ENCODE measurements at regions of chr17 and their contacts with region 1.

Region 1: DNA sequence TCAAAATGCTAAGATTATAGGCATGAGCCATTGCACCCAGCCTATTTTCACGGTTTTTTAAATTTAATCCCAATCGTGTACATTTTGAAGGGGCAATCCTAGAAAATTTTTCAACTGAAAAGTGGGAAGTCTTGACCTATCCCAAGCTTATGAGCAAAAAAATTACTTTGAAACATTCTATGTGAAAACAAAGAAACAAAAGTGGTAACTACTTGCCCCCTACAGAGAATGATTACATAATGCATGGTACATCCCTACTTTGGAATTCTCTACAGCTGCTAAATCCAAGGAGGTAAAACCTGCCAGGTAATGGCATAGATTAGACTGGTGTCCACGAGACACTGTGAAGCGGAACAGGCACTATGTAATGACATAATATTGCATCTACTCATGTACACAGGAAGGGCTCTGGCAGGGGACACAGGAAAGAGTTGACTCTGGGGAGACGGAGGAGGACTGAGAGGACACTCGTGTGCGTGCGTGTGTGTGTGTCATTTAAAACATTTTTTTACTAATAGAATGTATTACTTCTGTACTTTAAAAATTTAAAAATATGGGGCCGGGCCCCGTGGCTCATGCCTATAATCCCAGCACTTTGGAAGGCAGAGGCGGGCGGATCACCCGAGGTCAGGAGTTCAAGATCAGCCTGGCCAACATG is 15.7 kb downstream of the ASGR2 start:
- DNase-seq: no peak
- H3K4me3 ChIP-seq: no peak overlapping the region
- H3K27ac ChIP-seq: no peak overlapping the region
- H3K4me1 ChIP-seq: no peaks in the 10 kb centered on the region
- H3K27me3 ChIP-seq: peaks cover 14% of the 10 kb centered on the region
- CTCF ChIP-seq: no peak
- EP300 ChIP-seq: no peak
- POLR2A ChIP-seq: no peak

Region 2: DNA sequence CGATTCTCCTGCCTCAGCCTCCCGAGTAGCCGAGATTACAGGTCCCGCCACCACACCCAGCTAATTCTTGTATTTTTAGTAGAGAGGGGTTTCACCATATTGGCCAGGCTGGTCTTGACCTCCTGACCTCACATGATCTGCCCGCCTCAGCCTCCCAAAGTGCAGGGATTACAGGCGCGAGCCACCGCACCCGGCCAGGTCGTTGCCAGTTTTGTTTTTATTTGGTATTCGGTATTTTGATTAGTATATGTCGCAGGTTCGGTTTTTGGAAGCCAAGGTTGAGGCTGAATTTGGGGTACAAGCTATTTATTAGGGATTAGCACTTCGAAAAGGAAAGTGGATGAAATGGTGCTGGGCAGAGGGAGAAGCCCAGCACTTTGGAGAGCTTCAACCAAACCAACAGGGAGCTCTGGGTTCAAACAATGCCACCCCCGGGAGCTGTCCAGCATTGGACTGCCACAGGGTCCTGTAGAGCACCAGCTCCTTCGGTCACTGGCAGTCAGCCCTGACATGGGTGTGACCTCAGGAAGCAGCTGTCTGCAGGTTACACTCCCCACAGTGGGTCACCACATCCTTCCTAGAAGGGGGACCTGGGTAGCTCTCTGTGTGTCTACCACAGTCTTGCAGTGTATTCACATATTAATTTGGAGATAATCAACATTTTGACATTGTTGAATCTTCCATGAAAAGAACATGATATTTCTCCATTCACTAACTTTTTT is 17.4 kb before region 1 on chr17:
- in situ Hi-C with region 1: no loop called
- intact Hi-C with region 1: loop called (anchors 1 kb)
- DNase-seq: no peak
- H3K4me3 ChIP-seq: no peak overlapping the region
- H3K27ac ChIP-seq: no peak overlapping the region
- H3K4me1 ChIP-seq: no peaks in the 10 kb centered on the region
- H3K27me3 ChIP-seq: peaks cover 16% of the 10 kb centered on the region
- CTCF ChIP-seq: no peak
- EP300 ChIP-seq: no peak
- POLR2A ChIP-seq: no peak

Region 3: GRCh38 chr17:7186241-7186640 is 87.3 kb after region 1 on chr17:
- in situ Hi-C with region 1: no loop called
- intact Hi-C with region 1: no loop called
- DNase-seq: no peak
- H3K4me3 ChIP-seq: no peak overlapping the region
- H3K27ac ChIP-seq: no peak overlapping the region
- H3K4me1 ChIP-seq: peaks cover 0 to 7% (median 0%) of the 10 kb centered on the region in 4 donors
- H3K27me3 ChIP-seq: no peaks in the 10 kb centered on the region
- CTCF ChIP-seq: no peak
- EP300 ChIP-seq: no peak
- POLR2A ChIP-seq: no peak

Measured in transverse colon (tissue), 4 donors.